RWPE1 (cell line): ENCODE measurements at regions of chr16 and their contacts with region 1.

Region 1: DNA sequence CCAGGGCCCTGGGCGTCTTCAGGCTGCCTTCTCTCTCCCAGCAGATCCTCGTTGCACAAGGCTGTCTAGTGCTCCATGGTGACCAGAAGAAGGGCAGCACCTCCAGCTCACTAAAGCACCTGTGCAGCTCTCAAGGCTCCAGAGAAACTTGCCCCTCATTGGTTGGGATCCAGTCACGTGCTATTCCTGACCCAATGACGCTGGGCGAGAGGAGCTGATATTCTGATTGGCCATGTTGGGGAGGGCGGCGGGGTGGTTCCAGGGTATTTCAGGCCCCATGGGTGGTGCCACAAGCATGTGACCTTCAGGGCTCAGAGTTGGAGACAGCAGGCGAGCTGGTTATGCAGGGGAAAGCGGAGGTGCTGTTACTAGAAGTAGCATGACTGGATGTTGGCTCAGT is 309.1 kb downstream of the TOX3 start:
- DNase-seq: no peak
- H3K27ac ChIP-seq: no peak overlapping the region
- CTCF ChIP-seq: no peak

Region 2: DNA sequence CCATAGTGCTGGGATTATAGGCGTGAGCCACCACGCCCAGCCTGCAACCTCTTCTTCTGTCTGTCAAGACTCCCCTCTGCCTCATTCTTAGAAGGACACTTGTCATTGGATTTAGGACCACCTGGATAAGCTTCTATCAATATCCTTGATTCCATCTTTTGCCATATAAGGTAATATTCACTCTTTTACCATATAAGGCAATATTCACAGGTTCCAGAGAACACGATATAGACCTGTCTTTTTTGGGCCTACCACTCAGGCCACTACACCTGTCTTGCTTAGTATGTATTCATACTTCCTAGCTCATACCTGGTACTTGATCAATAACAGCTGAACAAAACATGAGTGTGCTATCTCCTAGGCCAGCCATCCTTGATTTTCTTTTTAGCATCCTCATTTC is 458.3 kb after region 1 on chr16:
- CTCF ChIA-PET with region 1: no interaction called
- POLR2A ChIA-PET with region 1: interaction called, 10 read pairs
- DNase-seq: no peak
- H3K27ac ChIP-seq: no peak overlapping the region
- CTCF ChIP-seq: no peak